A549 (cell line): ENCODE measurements at regions of chr1 and their contacts with region 1.

Region 1: GRCh38 chr1:110619412-110620249 is 13.5 kb upstream of the KCNA2 start:
- DNase-seq: peak; percentile 57 to 63
- ATAC-seq: peak; percentile 79 to 92; a peak in 5 of 6 replicates
- H3K4me3 ChIP-seq: no peak overlapping the region; the same call in 2 of the 3 replicates
- H3K27ac ChIP-seq: no peak overlapping the region
- H3K4me1 ChIP-seq: peaks cover 15% of the 10 kb centered on the region
- CTCF ChIP-seq: peak; percentile 66
- EP300 ChIP-seq: no peak
- POLR2A ChIP-seq: no peak
- RAD21 ChIP-seq: peak; percentile 43 to 45; a peak in 4 of 5 replicates

Region 2: DNA sequence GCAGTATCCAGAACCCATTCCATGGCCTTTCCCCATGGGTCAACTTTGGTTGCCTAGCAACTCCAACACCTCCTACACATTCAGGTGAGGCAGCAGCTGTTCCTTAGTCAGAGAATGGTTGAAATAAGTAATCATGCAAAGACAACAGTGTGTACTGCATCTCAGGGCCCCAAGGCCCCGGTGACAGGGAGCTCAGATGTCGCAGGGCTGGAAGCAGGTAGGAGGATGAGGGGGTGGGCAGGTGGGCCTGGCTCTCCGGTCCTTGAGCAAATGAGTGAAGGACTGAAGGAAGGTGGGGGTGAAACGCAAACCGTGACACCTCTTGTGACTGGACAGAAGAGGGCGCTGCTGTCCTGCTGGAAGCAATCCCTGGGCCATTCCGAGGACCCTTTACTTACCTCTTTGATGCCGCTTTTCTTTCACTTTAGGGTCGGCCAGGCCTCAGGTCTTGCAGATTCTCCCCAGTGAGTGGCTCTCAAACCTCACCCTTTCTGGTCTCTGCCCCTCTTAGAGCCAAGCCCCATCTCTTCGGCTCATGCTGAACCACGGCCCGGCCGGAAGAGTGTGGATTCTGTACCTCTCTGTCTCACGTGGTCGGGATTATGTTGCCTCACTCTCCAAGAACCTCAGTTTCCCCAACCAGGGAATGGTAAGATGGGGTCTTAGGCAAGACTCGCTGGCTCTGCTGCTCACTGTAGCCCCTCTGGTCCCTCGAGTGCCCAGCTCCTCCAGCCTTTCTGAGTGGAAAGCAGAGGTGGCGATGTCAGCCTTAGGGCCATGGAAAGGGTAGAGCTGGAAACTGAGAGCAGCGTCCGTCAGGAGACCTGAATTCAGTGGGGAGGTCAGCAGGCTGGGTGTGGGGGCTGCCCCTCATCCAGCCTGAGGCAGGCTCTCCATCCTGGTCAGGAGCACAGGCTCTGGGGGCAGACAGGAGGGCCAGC is 95.0 kb before region 1 on chr1:
- CTCF ChIA-PET with region 1: interaction called, 41 read pairs
- POLR2A ChIA-PET with region 1: no interaction called
- DNase-seq: peak; percentile 29 to 49
- ATAC-seq: peak in 1 of 2 experiments; percentile 89; a peak in 3 of 6 replicates
- H3K4me3 ChIP-seq: no peak overlapping the region
- H3K27ac ChIP-seq: no peak overlapping the region
- H3K4me1 ChIP-seq: peaks cover 16% of the 10 kb centered on the region
- CTCF ChIP-seq: peak; percentile 58
- EP300 ChIP-seq: no peak
- POLR2A ChIP-seq: no peak
- RAD21 ChIP-seq: peak; percentile 65 to 74

Region 3: DNA sequence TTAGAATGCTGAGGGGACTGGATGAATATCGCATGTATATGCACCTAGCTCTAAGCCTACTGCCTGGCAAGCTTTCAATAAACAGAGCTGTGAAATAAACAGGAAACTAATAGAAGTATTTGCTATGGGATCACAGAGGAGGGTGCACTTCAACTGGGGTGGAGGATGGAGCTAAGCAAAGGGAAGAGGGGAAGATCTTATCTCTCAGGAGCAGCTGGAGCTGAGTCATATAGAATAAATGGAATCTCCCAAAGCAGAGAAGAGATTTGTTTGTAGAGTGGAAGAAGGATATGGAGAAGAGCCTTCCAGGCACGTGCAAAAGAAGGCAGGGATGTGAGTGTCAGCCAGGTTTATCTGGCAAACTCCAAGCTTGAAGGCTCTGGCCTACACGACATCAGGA is 83.6 kb before region 1 on chr1:
- CTCF ChIA-PET with region 1: interaction called, 12 read pairs
- POLR2A ChIA-PET with region 1: no interaction called
- DNase-seq: no peak
- ATAC-seq: no peak
- H3K4me3 ChIP-seq: no peak overlapping the region
- H3K27ac ChIP-seq: no peak overlapping the region
- H3K4me1 ChIP-seq: no peaks in the 10 kb centered on the region
- CTCF ChIP-seq: no peak
- EP300 ChIP-seq: no peak
- POLR2A ChIP-seq: no peak
- RAD21 ChIP-seq: no peak

Region 4: DNA sequence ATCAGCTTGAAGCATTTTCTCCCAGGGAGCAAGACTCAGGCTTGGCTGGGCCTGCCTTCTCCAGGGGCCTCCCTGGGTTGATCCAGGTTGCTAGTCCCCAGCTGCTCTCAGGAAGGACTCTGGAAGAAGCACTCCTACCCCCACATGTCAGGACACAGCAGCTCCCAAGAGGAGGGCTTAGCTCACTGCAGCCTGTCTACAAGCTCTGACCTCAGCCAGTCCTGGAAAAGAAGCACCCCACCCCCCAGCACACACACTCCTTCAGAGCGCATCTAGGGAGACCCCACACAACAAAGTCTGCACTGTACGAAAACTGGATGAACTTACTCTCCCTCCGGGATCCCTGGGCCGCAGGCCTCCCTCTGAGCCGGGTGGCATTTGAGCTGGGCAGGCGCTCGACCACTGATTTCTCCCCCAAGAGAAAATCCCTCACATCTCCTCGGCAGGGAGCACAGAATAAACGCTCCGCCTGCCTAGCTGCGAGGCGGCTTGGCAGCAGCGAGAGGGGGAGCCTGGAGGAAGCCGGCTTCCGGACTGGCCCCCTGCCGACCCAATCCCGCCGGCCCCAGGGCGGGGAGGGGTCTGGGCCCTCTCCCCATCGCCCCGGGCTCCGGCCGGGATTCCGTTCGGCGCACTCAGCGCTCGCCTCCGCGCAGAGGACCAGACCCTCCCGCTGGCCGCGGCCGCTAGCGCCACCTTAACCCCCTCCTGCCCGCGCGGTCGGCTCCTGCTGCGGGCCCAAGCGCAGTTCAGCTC is 13.6 kb before region 1 on chr1 and contains the start of gene KCNA2:
- CTCF ChIA-PET with region 1: interaction called, 47 read pairs
- POLR2A ChIA-PET with region 1: no interaction called
- DNase-seq: no peak
- ATAC-seq: peak; percentile 40 to 78; a peak in 4 of 6 replicates
- H3K4me3 ChIP-seq: peak within 1 kb of the TSS; percentile 56
- H3K27ac ChIP-seq: peak within 1 kb of the TSS in 1 of 2 experiments; percentile 16; a peak in 3 of 6 replicates
- H3K4me1 ChIP-seq: no peaks in the 10 kb centered on the region
- CTCF ChIP-seq: no peak
- EP300 ChIP-seq: no peak
- POLR2A ChIP-seq: no peak
- RAD21 ChIP-seq: no peak
- polyA plus RNA-seq, gene KCNA2: 0.05 TPM in 2 replicates

Region 5: DNA sequence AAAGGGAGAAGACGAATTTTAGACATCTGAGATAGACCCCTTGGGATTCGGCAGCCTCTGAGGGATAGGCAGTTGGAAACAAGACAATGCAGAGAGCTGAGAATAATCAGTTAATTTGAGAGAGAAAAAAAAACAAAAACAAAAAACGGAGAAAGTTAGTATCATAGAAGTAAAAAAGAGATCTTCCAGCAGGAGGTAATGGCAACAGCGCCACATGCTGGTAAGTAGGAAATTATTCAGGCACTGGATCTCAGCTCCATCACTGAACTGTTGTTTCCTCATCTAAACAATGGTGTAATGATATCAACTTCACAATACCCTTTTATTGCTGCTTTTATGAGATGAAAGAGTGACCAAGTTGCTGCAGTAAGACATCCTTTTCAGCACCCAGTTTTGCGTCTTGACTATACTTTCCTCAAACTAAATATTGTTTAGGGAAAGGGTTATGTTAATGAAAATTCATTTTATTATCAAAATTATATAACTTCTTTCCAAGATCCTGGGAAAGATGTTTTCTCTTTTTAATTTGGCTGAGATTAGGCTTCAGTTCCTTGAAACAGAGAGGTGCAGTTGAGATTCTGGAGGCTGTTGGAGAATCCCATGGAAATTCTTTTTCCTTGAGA is 146.5 kb after region 1 on chr1:
- CTCF ChIA-PET with region 1: interaction called, 34 read pairs
- POLR2A ChIA-PET with region 1: no interaction called
- DNase-seq: peak; percentile 16 to 38
- ATAC-seq: peak in 1 of 2 experiments; percentile 60; a peak in 2 of 6 replicates
- H3K4me3 ChIP-seq: no peak overlapping the region
- H3K27ac ChIP-seq: no peak overlapping the region
- H3K4me1 ChIP-seq: no peaks in the 10 kb centered on the region
- CTCF ChIP-seq: peak; percentile 66
- EP300 ChIP-seq: no peak
- POLR2A ChIP-seq: no peak
- RAD21 ChIP-seq: peak; percentile 51 to 73; a peak in 3 of 5 replicates

Region 6: DNA sequence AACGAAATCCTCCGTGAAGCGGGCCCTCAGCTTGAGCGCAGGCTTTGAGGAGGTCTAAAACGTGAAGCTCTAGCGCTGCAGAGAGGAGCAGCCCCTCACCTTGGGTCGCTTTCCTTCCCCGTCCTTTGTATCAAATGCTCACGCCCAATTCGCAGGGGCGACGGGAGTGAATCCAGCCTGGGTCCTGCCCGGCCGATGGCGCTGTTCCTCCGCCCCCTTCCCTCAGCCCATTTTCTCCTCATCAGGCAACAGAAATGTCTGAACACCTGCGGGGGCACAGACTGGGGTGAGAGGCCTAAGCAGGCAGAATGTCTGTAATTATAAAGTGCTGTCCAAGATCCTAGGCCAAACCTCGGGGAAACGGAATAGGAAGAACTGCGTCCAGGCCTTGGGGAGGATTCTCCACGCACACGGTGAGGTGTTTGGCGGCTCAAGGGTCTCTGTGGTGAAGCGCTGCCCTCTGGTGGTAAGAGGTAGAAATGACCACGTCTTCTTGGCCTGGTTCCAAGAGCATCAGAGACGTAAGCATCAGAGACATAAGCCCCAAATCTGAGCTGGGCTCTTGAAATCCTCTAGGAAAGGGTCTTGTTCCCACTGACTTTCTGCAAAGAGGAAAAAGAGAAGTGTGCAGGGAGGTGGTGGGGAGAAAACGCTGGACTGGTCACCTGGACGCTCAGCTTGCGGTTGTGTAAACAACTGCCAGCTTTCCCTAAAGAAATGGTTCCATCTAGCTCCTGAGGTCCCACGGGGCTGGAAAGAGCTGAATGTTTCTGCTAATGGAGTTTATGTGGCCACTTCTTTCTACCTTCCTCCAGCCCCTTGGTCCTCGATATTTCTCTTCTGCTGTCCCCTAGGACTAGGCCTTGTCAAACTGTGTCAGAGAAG is 161.2 kb after region 1 on chr1:
- CTCF ChIA-PET with region 1: interaction called, 51 read pairs
- POLR2A ChIA-PET with region 1: no interaction called
- DNase-seq: peak; percentile 40 to 71
- ATAC-seq: peak; percentile 74 to 80; a peak in 4 of 6 replicates
- H3K4me3 ChIP-seq: no peak overlapping the region
- H3K27ac ChIP-seq: no peak overlapping the region
- H3K4me1 ChIP-seq: no peaks in the 10 kb centered on the region
- CTCF ChIP-seq: peak; percentile 57
- EP300 ChIP-seq: no peak
- POLR2A ChIP-seq: no peak
- RAD21 ChIP-seq: peak; percentile 51 to 53